ENCODE measurements at regions of chr12 and their contacts with region 1.

Region 1: GRCh38 chr12:26884765-26885576 is 52.0 kb upstream of the ITPR2 start:
- DNase-seq: peak; percentile 51
- ATAC-seq: peak; percentile 97
- H3K4me3 ChIP-seq: no peak overlapping the region
- H3K27ac ChIP-seq: no peak overlapping the region
- H3K4me1 ChIP-seq: peaks cover 2 to 7% of the 10 kb centered on the region in 2 experiments; a peak in 2 of 4 replicates
- H3K27me3 ChIP-seq: no peaks in the 10 kb centered on the region
- CTCF ChIP-seq: peak; percentile 77 to 97 (median 88)
- POLR2A ChIP-seq: no peak
- RAD21 ChIP-seq: peak; percentile 75

Region 2: GRCh38 chr12:26732005-26732908 is 152.7 kb before region 1 on chr12:
- CTCF ChIA-PET with region 1: no interaction called
- POLR2A ChIA-PET with region 1: no interaction called
- RAD21 ChIA-PET with region 1: no interaction called
- intact Hi-C with region 1: no loop called
- DNase-seq: no peak
- ATAC-seq: no peak
- H3K4me3 ChIP-seq: no peak overlapping the region
- H3K27ac ChIP-seq: no peak overlapping the region
- H3K4me1 ChIP-seq: peaks cover 0 to 5% of the 10 kb centered on the region in 2 experiments; a peak in 3 of 4 replicates
- H3K27me3 ChIP-seq: no peaks in the 10 kb centered on the region
- CTCF ChIP-seq: no peak
- POLR2A ChIP-seq: no peak
- RAD21 ChIP-seq: no peak

Region 3: DNA sequence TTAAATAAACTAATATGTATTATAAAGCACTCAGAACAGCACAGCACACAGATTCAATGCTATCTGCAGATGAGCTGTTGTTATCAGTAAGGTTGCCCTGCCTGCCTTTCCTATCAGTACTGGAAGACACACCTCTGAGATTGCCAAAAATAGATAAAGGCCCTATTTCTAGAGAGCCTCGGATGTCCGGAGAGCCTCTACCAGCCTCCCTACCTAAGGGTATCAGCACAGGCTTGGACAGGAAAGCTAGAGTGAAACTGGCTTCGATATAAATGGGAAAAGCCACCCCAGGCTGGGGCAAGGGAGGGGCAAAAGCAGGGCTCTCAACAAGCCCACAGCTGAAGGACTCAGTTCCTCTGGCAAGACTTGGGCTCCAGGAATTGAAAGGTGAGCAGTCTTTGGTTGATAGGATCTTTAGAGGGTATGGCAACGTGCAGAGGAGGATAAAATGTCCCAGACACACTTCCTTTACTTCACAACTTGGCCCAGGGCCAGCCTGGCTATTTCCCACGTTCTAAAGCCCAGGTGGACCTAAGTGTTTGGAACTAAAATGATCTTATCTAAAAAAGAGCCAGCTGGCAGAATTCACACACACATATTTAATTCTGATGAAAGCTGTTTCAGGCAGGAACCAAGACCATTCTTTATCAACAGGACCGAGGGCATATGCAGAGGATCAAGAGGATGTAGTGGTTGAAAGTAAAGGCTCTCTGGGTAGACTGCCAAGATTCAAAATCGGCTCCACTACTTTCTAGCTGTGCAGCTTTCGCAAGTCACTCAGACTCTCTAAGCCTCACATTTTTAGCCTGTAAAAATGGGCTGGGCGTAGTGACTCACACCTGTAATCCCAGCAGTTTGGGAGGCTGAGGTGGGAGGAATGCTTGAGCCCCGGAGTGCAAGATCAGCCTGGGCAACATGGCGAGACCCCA is 14.2 kb before region 1 on chr12:
- CTCF ChIA-PET with region 1: interaction called, 12 read pairs
- POLR2A ChIA-PET with region 1: no interaction called
- RAD21 ChIA-PET with region 1: no interaction called
- intact Hi-C with region 1: no loop called
- DNase-seq: peak; percentile 33
- ATAC-seq: peak; percentile 88
- H3K4me3 ChIP-seq: peak overlapping the region in 1 of 2 experiments; percentile 17; a peak in 1 of 4 replicates
- H3K27ac ChIP-seq: no peak overlapping the region
- H3K4me1 ChIP-seq: peaks cover 17 to 24% of the 10 kb centered on the region in 2 experiments; a peak in 3 of 4 replicates
- H3K27me3 ChIP-seq: no peaks in the 10 kb centered on the region
- CTCF ChIP-seq: no peak
- POLR2A ChIP-seq: no peak
- RAD21 ChIP-seq: no peak

Region 4: GRCh38 chr12:27652174-27652763 is 767.3 kb after region 1 on chr12:
- CTCF ChIA-PET with region 1: no interaction called
- POLR2A ChIA-PET with region 1: no interaction called
- RAD21 ChIA-PET with region 1: no interaction called
- intact Hi-C with region 1: no loop called
- DNase-seq: peak; percentile 58
- ATAC-seq: peak; percentile 78
- H3K4me3 ChIP-seq: no peak overlapping the region
- H3K27ac ChIP-seq: no peak overlapping the region; the same call in 1 of the 2 replicates
- H3K4me1 ChIP-seq: no peaks in the 10 kb centered on the region
- H3K27me3 ChIP-seq: no peaks in the 10 kb centered on the region
- CTCF ChIP-seq: peak; percentile 68 to 87 (median 82); a peak in 5 of 6 replicates
- POLR2A ChIP-seq: no peak
- RAD21 ChIP-seq: peak; percentile 83